Common myeloid progenitor, CD34-positive (primary cell): ENCODE measurements at regions of chr7 and their contacts with region 1.

Region 1: GRCh38 chr7:129611246-129612111 is at the start of gene NRF1:
- DNase-seq: peak; percentile 88 to 95 (median 91)
- H3K4me3 ChIP-seq: peak within 1 kb of the TSS; percentile 76 to 98 (median 93)
- H3K27ac ChIP-seq: peak within 1 kb of the TSS; percentile 93 to 98
- H3K4me1 ChIP-seq: peaks cover 32 to 60% (median 53%) of the 10 kb centered on the region in 4 experiments
- H3K27me3 ChIP-seq: no peaks in the 10 kb centered on the region

Region 2: GRCh38 chr7:129591868-129592267 is 19.6 kb before region 1 on chr7:
- CTCF ChIA-PET with region 1: interaction called, 20 read pairs
- POLR2A ChIA-PET with region 1: interaction called, 9 read pairs
- DNase-seq: no peak
- H3K4me3 ChIP-seq: no peak overlapping the region
- H3K27ac ChIP-seq: no peak overlapping the region
- H3K4me1 ChIP-seq: peaks cover 0 to 9% (median 3%) of the 10 kb centered on the region in 4 experiments
- H3K27me3 ChIP-seq: no peaks in the 10 kb centered on the region

Region 3: GRCh38 chr7:129630341-129630740 is 18.9 kb after region 1 on chr7:
- CTCF ChIA-PET with region 1: interaction called, 24 read pairs
- POLR2A ChIA-PET with region 1: interaction called, 3 read pairs
- DNase-seq: no peak
- H3K4me3 ChIP-seq: no peak overlapping the region
- H3K27ac ChIP-seq: no peak overlapping the region
- H3K4me1 ChIP-seq: peaks cover 0 to 17% (median 3%) of the 10 kb centered on the region in 4 experiments
- H3K27me3 ChIP-seq: no peaks in the 10 kb centered on the region

Region 4: DNA sequence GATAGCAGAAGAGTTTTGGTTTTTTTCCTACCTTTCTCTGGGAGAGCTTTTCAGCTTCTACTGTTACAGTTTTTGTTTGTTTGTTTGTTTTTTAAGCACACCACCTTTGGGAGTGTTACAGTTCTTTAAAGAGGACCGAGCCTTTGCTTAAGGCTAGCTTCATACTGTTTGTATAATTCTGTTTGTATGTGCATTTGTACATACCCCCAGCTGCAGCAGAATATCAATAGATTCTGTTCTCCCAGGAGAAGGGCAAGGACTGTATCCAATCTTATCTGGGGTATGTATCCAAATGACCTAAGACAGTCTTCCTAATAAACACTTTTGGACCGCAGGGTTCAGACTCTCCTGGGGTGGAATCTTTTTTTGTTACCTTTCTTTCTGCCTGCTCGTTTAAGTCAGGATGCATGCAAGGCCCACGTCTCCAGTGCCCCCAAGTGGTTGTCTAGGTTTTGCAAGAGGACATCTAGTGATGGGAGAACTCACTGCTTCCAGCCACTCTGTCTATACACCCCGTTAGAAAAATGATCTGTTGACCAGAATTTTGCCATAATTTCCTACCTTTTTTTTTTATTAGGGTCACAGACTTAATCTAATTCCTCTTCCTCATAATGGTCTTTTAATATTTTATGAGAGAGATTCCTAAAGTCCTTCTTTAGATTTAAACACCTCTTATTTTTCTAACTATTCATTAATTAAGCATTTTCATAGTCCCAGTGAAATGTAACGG is 24.0 kb after region 1 on chr7:
- CTCF ChIA-PET with region 1: interaction called, 40 read pairs
- POLR2A ChIA-PET with region 1: interaction called, 3 read pairs
- DNase-seq: peak; percentile 80 to 85 (median 81)
- H3K4me3 ChIP-seq: no peak overlapping the region
- H3K27ac ChIP-seq: no peak overlapping the region
- H3K4me1 ChIP-seq: peaks cover 0 to 5% (median 1%) of the 10 kb centered on the region in 4 experiments
- H3K27me3 ChIP-seq: no peaks in the 10 kb centered on the region

Region 5: GRCh38 chr7:129644634-129645230 is 33.3 kb after region 1 on chr7:
- CTCF ChIA-PET with region 1: interaction called, 40 read pairs
- POLR2A ChIA-PET with region 1: no interaction called
- DNase-seq: peak; percentile 52 to 71 (median 63)
- H3K4me3 ChIP-seq: no peak overlapping the region
- H3K27ac ChIP-seq: no peak overlapping the region
- H3K4me1 ChIP-seq: peaks cover 0 to 7% (median 0%) of the 10 kb centered on the region in 4 experiments
- H3K27me3 ChIP-seq: no peaks in the 10 kb centered on the region